Mammary epithelial cell (primary cell): ENCODE measurements at regions of chr16 and their contacts with region 1.

Region 1: GRCh38 chr16:68131813-68132706 is 46.9 kb downstream of the NFATC3 start:
- DNase-seq: no peak
- H3K4me3 ChIP-seq: no peak overlapping the region
- H3K27ac ChIP-seq: no peak overlapping the region
- H3K4me1 ChIP-seq: no peaks in the 10 kb centered on the region
- H3K27me3 ChIP-seq: no peaks in the 10 kb centered on the region
- CTCF ChIP-seq: no peak

Region 2: DNA sequence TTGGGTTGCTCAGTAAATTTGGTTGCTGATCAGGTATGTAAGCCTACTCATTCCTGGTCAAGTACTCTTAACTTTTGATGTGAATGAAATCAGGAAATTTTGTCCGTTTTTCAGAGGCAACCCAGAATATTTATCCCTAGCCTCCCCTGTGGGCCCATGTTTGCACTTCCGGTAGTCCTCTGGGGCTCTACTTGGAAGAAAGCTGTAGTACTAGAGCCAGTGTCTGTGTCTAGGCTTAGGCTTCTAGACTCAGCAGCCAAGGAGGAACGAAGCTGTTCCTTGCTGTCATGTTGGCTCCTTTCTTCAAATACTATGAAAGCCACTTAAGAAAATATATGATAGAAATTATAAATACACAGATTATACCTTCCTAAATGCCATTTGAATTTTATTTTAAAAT is 82.7 kb after region 1 on chr16:
- CTCF ChIA-PET with region 1: no interaction called
- dilution Hi-C with region 1: loop called (anchors 5 kb)
- in situ Hi-C with region 1: no loop called
- intact Hi-C with region 1: no loop called
- DNase-seq: no peak
- H3K4me3 ChIP-seq: no peak overlapping the region
- H3K27ac ChIP-seq: no peak overlapping the region
- H3K4me1 ChIP-seq: no peaks in the 10 kb centered on the region
- H3K27me3 ChIP-seq: no peaks in the 10 kb centered on the region
- CTCF ChIP-seq: no peak